AG04449 (cell line): ENCODE measurements at regions of chr11 and their contacts with region 1.

Region 1: GRCh38 chr11:57345555-57346211 is 7.5 kb downstream of the P2RX3 start:
- DNase-seq: no peak
- H3K4me3 ChIP-seq: no peak overlapping the region
- CTCF ChIP-seq: peak; percentile 72

Region 2: GRCh38 chr11:57335343-57336110 is 10.2 kb before region 1 on chr11 and contains the start of gene SSRP1:
- CTCF ChIA-PET with region 1: interaction called, 35 read pairs
- POLR2A ChIA-PET with region 1: no interaction called
- DNase-seq: no peak
- H3K4me3 ChIP-seq: peak within 1 kb of the TSS; percentile 78
- CTCF ChIP-seq: no peak

Region 3: DNA sequence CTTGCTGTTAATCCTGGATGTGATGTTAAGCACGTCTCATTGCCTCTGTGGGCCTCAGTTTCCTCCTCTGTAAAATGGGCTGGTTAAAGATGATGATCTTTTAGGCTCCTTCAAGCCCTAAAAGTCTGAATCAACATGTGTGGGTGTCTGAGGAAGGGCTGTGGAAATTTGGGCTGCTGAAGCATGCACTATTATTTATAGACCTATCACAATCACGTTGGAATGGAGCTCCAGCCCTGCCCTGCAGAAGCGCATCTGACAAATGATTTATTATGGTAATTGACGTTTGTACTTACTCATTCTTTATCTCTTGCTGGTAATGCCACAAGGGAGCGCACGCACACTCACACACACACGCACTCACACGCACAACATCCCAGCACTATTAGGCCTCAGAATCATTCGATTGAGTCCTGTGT is 12.9 kb after region 1 on chr11:
- CTCF ChIA-PET with region 1: interaction called, 40 read pairs
- POLR2A ChIA-PET with region 1: no interaction called
- DNase-seq: no peak
- H3K4me3 ChIP-seq: no peak overlapping the region
- CTCF ChIP-seq: no peak

Region 4: DNA sequence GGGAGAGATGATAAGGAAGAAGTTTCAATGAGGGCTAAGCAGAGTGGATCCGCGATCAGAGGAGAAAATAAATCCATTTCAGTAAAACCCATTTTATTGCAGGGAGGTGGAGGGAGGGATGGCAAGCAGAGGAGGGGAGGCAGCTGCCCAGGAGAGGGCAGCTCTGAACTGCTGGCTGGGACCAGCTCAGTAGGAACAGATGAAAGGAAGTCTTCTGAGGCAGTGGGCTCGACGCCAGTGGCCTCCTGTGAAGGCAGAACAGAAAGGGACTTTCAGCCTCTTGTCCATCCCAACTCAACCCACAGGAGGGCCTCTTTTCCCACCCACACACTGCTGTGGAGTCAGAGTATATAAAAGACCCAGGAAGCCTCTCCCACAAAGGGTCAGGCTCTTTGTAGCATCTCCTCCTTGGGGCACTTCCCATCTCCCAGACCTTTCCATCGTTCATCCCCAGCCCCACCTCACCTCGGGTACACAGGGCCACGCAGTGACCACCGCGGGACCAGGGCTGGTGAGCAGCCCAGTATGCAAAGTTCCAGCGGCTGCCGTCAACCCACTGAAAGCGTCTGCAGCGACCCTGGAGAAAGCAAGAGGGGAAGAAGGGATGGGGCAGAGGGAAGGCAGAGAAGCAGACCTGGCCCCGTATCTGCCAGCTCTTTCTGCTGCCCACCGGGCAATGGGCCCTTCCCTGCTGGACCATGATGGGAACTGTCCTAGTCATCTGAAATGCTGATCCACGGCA is 41.8 kb after region 1 on chr11:
- CTCF ChIA-PET with region 1: no interaction called
- POLR2A ChIA-PET with region 1: no interaction called
- DNase-seq: no peak
- H3K4me3 ChIP-seq: no peak overlapping the region
- CTCF ChIP-seq: no peak

Region 5: DNA sequence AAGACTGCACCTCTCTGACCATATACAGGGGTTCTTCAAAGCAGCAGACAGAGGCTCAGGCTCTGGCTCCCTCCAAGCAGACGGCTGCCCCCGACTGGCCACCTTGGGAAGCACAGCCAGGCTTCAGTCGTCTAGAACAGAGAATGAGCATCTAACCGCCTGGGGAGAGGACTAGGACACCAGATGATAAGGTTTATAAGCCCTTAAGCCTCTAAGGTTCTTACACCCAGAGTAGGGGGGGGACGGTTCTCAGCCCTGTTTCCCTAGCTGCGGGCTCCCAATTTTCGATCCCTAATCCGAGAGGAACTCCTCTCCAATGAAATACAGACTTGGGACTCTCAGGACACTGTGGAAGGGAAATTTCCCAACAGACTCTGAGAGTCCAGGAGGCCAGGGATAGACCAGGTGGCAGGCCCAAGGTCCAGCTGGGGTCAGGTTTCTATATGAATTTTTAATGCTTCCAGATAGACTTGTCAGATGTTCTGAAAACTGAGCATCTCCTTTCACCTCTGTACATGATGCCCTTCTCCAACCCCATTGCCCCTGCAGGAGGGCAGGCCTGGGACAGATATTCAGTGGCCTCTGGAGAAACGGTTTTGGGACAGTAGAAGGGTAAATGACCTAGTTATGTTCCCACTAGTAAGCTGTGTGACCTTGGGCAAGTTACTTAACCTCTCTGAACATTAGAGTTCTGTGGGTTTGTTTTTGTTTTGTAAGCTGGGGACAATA is 134.9 kb after region 1 on chr11:
- CTCF ChIA-PET with region 1: interaction called, 79 read pairs
- POLR2A ChIA-PET with region 1: no interaction called
- DNase-seq: no peak
- H3K4me3 ChIP-seq: no peak overlapping the region
- CTCF ChIP-seq: peak; percentile 83

Region 6: DNA sequence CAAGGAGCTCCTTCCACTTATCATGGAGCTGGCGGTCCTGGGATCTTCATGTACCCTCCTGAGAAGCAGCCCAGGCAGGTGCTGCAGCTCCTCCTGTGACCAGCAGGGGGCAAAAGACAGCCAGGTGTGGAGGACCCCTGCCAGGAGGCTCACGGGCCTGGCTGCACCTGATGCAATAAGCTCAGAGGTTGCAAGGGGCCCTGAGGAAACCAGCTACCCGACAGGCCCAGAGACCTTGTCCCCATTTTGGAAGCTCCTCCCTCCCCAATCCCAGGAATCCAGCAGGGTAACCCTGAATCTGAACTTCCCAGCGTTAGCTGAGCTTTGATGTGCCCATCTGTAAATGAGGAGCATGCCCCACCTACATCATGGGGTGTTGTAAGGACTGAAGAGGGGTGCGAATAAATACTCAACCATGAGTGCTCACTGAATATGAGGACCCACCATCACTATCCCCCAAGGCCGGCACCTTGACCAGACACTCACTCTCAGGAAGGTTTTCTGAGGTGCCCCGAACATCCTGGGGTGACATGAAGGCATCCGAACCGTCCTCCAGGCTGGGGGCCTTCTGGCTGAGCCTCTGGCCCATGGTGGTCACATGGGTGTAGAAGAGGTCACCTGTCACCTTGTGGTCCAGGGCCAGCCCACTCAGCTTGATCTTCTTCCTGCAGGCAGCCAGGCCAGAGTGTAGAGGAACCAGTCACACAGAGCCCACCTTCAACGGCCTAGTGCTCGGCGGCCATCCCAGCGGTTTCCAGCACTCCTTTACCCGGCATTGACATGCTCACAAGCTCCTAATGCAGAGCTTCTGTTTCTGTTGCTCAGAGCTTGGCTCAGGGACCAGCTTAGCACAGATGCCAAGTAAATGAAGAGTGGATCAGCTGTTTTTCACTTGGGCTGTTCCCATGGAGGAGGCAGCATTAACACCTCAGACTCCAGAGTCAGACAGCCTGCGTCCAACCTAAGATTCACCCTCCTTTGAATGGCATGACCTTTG is 148.1 kb after region 1 on chr11:
- CTCF ChIA-PET with region 1: interaction called, 12 read pairs
- POLR2A ChIA-PET with region 1: no interaction called
- DNase-seq: no peak
- H3K4me3 ChIP-seq: no peak overlapping the region
- CTCF ChIP-seq: peak; percentile 89